ENCODE measurements at regions of chr3 and their contacts with region 1.

Region 1: DNA sequence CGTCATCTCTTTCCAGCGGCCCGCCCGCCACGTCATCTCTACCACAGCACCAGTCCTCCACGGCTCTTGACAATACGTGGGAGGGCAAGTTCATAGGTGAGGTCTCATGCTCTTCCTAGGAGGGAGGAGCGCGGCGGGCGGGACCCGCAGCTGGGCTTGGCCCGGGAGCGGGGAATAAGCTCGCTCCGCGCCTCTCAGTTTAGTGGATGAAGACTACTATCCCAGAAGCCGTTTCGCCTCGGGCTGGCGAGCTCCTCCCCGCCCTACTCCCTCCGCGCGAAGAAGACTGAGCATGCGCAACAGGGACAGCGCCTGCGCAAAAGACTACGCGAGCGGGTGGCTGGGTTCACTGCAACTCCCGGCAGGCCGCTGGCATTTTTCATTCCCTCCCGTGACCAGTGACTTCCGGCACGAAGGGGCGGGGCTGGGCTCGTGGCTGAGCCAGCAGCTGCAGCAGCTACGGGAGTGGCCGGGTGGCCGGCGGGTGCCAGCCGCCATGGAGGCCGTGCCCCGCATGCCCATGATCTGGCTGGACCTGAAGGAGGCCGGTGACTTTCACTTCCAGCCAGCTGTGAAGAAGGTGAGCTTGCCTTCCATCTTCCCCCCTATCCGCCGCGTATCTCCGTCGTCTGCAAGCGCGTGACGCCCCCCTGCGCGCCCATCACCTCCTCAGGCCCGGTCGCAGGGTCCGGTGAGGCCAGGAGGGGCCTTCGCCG is at the start of gene PTPN23:
- DNase-seq: peak; percentile 96 to 99
- H3K4me3 ChIP-seq: peak within 1 kb of the TSS; percentile 79 to 93
- H3K27ac ChIP-seq: peak within 1 kb of the TSS; percentile 95 to 97
- H3K4me1 ChIP-seq: peaks cover 3 to 26% of the 10 kb centered on the region in 2 donors
- H3K27me3 ChIP-seq: no peaks in the 10 kb centered on the region
- CTCF ChIP-seq: no peak
- total RNA-seq, gene PTPN23: 35.2 TPM

Region 2: DNA sequence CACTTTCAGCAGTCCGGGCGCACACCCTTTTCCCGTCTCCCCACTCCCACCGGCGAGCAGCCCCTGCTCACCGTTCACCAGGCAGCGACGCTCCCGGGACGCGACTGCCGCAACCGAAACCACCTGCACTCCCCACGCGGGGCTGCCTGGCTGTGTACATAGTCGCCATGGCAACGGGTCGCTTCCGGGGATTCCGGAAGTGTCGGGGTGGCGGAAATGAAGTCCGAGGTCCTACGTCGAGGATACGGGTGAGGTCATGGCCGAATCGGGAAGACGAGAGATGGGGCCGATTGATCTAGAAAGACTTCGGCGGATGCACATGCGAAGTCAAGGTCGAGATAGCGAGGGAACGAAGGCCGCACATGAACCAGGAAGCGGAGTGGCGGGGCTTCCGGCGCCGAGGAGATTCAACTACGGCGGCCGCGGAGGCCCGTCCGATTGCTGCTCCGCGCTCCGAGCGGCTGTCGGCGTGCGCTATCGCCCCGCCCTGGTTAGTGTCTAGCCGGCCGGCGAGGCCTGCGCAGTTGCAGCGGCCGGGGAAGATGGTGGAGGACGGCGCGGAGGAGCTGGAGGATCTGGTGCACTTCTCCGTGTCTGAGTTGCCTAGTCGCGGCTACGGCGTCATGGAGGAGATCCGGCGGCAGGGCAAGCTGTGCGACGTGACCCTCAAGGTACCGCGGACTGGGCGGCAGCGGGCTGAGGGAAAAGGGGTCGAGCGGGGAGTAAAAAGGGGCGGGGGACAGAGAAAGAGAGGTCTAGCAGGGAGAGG is 98.2 kb before region 1 on chr3 and contains the starts of genes KIF9 and KLHL18:
- intact Hi-C with region 1: loop called (anchors 2 kb)
- DNase-seq: peak; percentile 82 to 97
- H3K4me3 ChIP-seq: peak within 1 kb of the TSS; percentile 74
- H3K27ac ChIP-seq: peak within 1 kb of the TSS; percentile 89 to 94
- H3K4me1 ChIP-seq: peaks cover 7 to 27% of the 10 kb centered on the region in 2 donors
- H3K27me3 ChIP-seq: no peaks in the 10 kb centered on the region
- CTCF ChIP-seq: no peak
- total RNA-seq, gene KIF9: not detected
- total RNA-seq, gene KLHL18: 1.8 TPM

Region 3: GRCh38 chr3:47433796-47434195 is 53.0 kb after region 1 on chr3:
- intact Hi-C with region 1: no loop called
- DNase-seq: peak in 1 of 2 donors; percentile 15
- H3K4me3 ChIP-seq: no peak overlapping the region
- H3K27ac ChIP-seq: no peak overlapping the region
- H3K4me1 ChIP-seq: no peaks in the 10 kb centered on the region
- H3K27me3 ChIP-seq: no peaks in the 10 kb centered on the region
- CTCF ChIP-seq: no peak

Region 4: DNA sequence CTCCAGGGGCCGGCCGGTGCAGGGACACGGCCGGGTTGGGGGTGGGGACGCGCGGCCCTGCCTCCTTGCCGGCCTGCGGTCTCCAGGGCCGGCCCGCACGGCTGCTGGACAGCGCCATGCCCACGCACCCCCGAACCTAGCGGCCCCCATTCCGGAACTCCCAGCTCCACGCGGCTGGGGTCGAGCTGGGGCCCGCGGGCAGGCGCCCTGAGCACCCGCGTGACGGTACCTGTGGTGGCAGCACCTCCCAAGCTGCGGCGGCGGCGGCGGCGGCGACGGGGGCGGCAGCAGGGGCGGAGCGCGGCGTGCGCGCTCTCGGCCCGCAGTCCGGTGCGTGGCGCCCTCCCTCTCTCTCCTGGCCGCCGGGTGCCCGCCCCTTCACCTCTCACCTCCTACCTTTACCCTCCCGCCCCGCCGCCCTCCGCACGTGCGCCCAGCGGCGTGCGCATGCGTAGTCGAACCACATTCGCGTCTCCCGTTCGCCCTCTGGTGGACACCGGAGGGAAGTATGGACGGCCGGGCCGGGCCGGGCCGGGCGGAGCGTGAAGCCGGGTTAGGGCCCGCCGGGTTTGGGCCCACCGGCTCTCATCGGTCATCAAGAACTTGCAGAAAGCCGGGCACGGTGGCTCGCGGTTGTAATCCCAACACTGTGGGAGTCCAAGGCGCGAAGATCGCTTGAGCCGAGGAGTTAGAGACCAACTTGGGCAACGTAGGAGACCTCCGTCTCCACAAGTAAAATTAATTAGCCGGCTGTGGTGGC is 95.0 kb after region 1 on chr3 and contains the start of gene SCAP:
- intact Hi-C with region 1: loop called (anchors 5 kb)
- DNase-seq: peak; percentile 67 to 96
- H3K4me3 ChIP-seq: peak within 1 kb of the TSS; percentile 84 to 88
- H3K27ac ChIP-seq: peak within 1 kb of the TSS; percentile 81 to 90
- H3K4me1 ChIP-seq: peaks cover 8 to 15% of the 10 kb centered on the region in 2 donors
- H3K27me3 ChIP-seq: no peaks in the 10 kb centered on the region
- CTCF ChIP-seq: peak; percentile 93 to 99 (median 97)
- total RNA-seq, gene SCAP: 155 TPM

Region 5: GRCh38 chr3:47781685-47782445 is 401.1 kb after region 1 on chr3 and contains the start of gene SMARCC1:
- intact Hi-C with region 1: loop called (anchors 5 kb)
- DNase-seq: peak; percentile 89 to 99
- H3K4me3 ChIP-seq: peak within 1 kb of the TSS; percentile 75 to 97
- H3K27ac ChIP-seq: peak within 1 kb of the TSS; percentile 93 to 97
- H3K4me1 ChIP-seq: peaks cover 0 to 18% of the 10 kb centered on the region in 2 donors
- H3K27me3 ChIP-seq: no peaks in the 10 kb centered on the region
- CTCF ChIP-seq: no peak
- total RNA-seq, gene SMARCC1: 24.8 TPM

Measured in ascending aorta (tissue), 2 donors.